Activated CD4-positive, alpha-beta T cell treated with anti-CD3 and anti-CD28 coated beads, Interleukin-2, amount 10 ng/mL, durations not matched to agents 24 days and 14 days (primary cell): ENCODE measurements at regions of chr20 and their contacts with region 1.

Region 1: DNA sequence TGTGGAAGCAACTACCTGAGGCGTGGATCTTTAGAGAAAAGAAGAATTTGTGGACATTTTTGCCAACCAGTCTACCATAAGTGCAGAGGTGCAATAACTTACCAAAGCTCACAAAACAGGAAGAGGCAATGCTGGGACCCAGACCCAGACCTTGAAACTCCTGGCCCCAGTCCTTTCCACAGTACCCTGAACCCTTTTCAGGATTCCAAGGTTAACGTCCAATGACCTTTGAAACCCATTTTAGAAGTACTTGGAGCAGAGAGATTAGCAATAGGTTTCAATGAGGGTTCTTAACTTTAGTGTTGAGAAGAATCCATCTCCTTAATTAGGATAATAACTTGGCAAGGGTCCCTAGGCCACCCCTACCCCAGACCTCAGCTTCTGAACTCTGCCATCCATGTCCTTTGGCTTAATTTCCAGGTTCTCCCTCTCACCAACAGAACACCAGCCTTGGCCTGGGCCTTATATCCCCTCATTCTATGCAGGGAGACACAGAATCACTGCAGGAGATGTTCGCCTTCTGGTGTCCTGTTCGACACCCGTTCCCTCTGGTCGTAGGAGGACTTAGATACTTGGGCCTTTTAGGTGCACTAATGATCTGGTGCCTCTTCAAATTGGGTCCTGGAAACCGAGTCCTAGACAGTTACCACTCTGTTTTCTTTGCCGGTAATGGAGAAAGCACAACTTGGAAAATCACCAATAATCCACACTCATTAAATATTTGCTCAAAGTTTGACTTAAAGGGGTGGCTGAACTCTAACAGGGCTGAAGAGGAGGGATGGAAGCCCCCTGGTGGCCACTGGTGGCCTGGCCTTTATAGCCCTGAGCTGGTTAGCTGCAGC is 40.6 kb downstream of the ISM1 start:
- DNase-seq: peak; percentile 89
- H3K4me3 Mint-ChIP-seq: no peak overlapping the region
- H3K27ac Mint-ChIP-seq: no peak overlapping the region
- H3K4me1 Mint-ChIP-seq: peaks cover 12% of the 10 kb centered on the region
- H3K27me3 Mint-ChIP-seq: no peaks in the 10 kb centered on the region

Region 2: GRCh38 chr20:13221673-13222318 is 39.9 kb before region 1 on chr20:
- intact Hi-C with region 1: loop called (anchors 5 kb)
- DNase-seq: peak; percentile 93
- H3K4me3 Mint-ChIP-seq: peak overlapping the region; percentile 89
- H3K27ac Mint-ChIP-seq: peak overlapping the region; percentile 81
- H3K4me1 Mint-ChIP-seq: peaks cover 16% of the 10 kb centered on the region
- H3K27me3 Mint-ChIP-seq: peaks cover 57% of the 10 kb centered on the region